Activated CD4-positive, alpha-beta T cell treated with anti-CD3 and anti-CD28 coated beads, Interleukin-2, amount 10 ng/mL, durations not matched to agents 24 days and 14 days (primary cell): ENCODE measurements at regions of chr7 and their contacts with region 1.

Region 1: DNA sequence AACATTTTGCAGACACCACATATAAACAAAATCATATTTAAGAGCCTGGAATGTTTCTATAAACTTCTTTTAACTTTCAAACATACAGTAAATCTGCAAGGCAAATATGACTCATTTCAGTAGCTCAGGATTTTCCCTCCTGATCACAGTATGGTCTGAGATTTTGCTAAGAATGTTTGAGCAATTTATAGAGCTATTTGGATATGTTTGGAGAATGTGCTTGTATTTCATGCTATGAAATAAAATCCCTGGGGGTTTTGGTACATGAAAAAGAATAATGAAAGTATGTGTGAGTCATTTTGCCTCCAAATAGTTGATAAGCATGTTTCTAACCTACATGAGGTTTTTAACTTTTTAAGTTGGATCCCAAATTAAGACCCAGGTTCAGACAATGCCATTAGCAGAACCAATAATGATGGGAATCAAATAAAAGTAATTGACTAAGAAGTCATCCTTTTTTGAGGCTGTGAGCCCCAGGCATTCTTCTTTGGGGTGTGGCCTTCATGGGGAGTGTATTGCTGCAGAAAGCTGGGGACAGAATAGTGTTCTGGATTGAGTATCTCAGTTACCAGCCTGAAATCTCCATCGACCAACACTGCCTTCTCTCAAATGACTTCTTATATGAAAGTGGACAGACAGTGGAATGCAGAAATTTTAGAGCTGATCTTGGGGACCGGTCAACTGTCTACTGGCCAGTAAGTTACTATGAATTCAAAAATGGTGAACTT is 66.1 kb upstream of the AGBL3 start:
- DNase-seq: no peak
- H3K4me3 Mint-ChIP-seq: peak overlapping the region; percentile 16
- H3K27ac Mint-ChIP-seq: peak overlapping the region; percentile 34
- H3K4me1 Mint-ChIP-seq: peaks cover 13% of the 10 kb centered on the region
- H3K27me3 Mint-ChIP-seq: no peaks in the 10 kb centered on the region

Region 2: GRCh38 chr7:134905375-134905774 is 14.8 kb before region 1 on chr7:
- intact Hi-C with region 1: loop called (anchors 1 kb)
- DNase-seq: no peak
- H3K4me3 Mint-ChIP-seq: no peak overlapping the region
- H3K27ac Mint-ChIP-seq: no peak overlapping the region
- H3K4me1 Mint-ChIP-seq: peaks cover 16% of the 10 kb centered on the region
- H3K27me3 Mint-ChIP-seq: no peaks in the 10 kb centered on the region

Region 3: GRCh38 chr7:134946260-134946659 is 26.1 kb after region 1 on chr7:
- intact Hi-C with region 1: loop called (anchors 1 kb)
- DNase-seq: no peak
- H3K4me3 Mint-ChIP-seq: no peak overlapping the region
- H3K27ac Mint-ChIP-seq: no peak overlapping the region
- H3K4me1 Mint-ChIP-seq: peaks cover 7% of the 10 kb centered on the region
- H3K27me3 Mint-ChIP-seq: peaks cover 2% of the 10 kb centered on the region